ENCODE measurements at regions of chr5 and their contacts with region 1.

Region 1: DNA sequence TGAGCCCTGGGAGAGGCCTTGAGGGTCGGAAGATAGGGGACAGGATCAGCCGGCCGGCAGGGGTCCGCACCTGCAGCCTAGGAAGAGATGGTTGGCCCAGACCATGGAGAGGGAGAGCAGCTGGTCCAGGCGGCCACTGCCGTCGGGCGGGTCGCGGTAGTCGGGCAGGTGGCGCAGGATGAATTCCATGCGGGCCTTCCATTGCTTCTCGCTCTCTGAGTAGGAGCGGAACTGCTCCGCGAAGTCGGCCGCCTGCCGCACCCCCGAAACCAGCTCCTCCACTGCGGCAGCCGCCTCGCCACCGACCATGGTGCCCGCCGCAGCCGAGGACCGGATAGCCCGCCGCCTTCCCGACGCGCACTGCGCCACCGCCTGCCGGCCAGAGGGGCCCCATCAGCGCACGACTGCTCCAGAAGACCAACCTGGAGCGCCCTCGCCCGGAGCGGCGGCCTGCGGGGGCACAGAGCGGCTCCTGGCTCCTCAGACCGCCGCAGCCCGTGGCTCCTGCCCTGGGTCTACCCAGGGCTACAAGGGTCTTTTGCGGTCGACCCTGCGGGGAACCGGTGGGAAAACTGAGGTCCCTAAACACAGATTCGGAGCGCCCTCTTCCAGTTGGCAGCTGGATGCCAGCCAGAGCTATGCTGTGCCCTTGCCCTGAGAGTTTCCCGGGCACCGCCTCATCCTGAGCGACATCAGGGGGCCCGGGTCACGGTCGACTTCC is at the start of gene CDKN2AIPNL:
- DNase-seq: peak; percentile 83 to 93 (median 89)
- ATAC-seq: peak; percentile 100
- H3K4me3 ChIP-seq: peak within 1 kb of the TSS; percentile 82
- H3K4me3 Mint-ChIP-seq: peak within 1 kb of the TSS; percentile 86 to 96 (median 92)
- H3K27ac ChIP-seq: peak within 1 kb of the TSS; percentile 82
- H3K27ac Mint-ChIP-seq: peak within 1 kb of the TSS; percentile 63 to 93 (median 90)
- H3K4me1 ChIP-seq: peaks cover 16 to 23% of the 10 kb centered on the region in 2 donors
- H3K4me1 Mint-ChIP-seq: peaks cover 20 to 54% (median 38%) of the 10 kb centered on the region in 7 donors
- H3K27me3 ChIP-seq: no peaks in the 10 kb centered on the region
- H3K27me3 Mint-ChIP-seq: no peaks in the 10 kb centered on the region
- total RNA-seq, gene CDKN2AIPNL: 11.5 to 20.8 (median 16.8) TPM

Region 2: DNA sequence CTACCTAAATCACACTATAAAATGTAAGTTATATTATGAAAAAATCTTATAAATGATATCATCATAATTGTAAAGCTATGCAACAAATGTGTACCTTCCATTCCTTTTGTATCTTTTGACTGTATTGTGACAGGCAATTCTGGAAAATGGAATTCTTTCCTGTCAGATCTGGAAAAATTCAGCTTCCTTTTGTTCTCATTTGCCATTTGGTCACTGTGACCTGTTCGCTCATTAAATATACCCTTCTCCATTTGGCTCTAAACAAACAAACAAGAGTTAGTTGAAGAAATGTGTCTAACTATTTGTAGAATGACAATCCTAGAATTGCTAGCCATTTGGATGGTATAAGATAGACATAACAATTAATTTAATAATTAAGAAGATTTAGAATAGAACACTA is 107.4 kb before region 1 on chr5:
- CTCF ChIA-PET with region 1: interaction called, 6 read pairs
- POLR2A ChIA-PET with region 1: interaction called, 5 read pairs
- intact Hi-C with region 1: loop called in 1 of 2 experiments (anchors 1 kb)
- DNase-seq: no peak
- ATAC-seq: no peak
- H3K4me3 ChIP-seq: no peak overlapping the region
- H3K4me3 Mint-ChIP-seq: no peak overlapping the region
- H3K27ac ChIP-seq: no peak overlapping the region
- H3K27ac Mint-ChIP-seq: no peak overlapping the region
- H3K4me1 ChIP-seq: no peaks in the 10 kb centered on the region
- H3K4me1 Mint-ChIP-seq: peaks cover 0 to 5% (median 0%) of the 10 kb centered on the region in 7 donors
- H3K27me3 ChIP-seq: no peaks in the 10 kb centered on the region
- H3K27me3 Mint-ChIP-seq: peaks cover 0 to 8% (median 0%) of the 10 kb centered on the region in 5 donors

Region 3: GRCh38 chr5:134394932-134395331 is 16.8 kb before region 1 on chr5:
- CTCF ChIA-PET with region 1: no interaction called
- POLR2A ChIA-PET with region 1: interaction called, 4 read pairs
- intact Hi-C with region 1: loop called in 1 of 2 experiments (anchors 2 kb)
- DNase-seq: no peak
- ATAC-seq: no peak
- H3K4me3 ChIP-seq: no peak overlapping the region
- H3K4me3 Mint-ChIP-seq: no peak overlapping the region
- H3K27ac ChIP-seq: no peak overlapping the region
- H3K27ac Mint-ChIP-seq: no peak overlapping the region
- H3K4me1 ChIP-seq: no peaks in the 10 kb centered on the region
- H3K4me1 Mint-ChIP-seq: peaks cover 0 to 9% (median 0%) of the 10 kb centered on the region in 7 donors
- H3K27me3 ChIP-seq: no peaks in the 10 kb centered on the region
- H3K27me3 Mint-ChIP-seq: no peaks in the 10 kb centered on the region

Region 4: GRCh38 chr5:134465816-134466240 is 54.1 kb after region 1 on chr5:
- CTCF ChIA-PET with region 1: interaction called, 4 read pairs
- POLR2A ChIA-PET with region 1: interaction called, 10 read pairs
- intact Hi-C with region 1: loop called (anchors 1 to 5 kb)
- DNase-seq: peak in 6 of 9 donors; percentile 16 to 73 (median 20)
- ATAC-seq: peak; percentile 71
- H3K4me3 ChIP-seq: peak overlapping the region; percentile 71
- H3K4me3 Mint-ChIP-seq: peak overlapping the region; percentile 75 to 93 (median 86)
- H3K27ac ChIP-seq: peak overlapping the region; percentile 66
- H3K27ac Mint-ChIP-seq: peak overlapping the region in 8 of 9 donors; percentile 66 to 93 (median 86)
- H3K4me1 ChIP-seq: peaks cover 8 to 16% of the 10 kb centered on the region in 2 donors
- H3K4me1 Mint-ChIP-seq: peaks cover 7 to 25% (median 18%) of the 10 kb centered on the region in 7 donors
- H3K27me3 ChIP-seq: no peaks in the 10 kb centered on the region
- H3K27me3 Mint-ChIP-seq: no peaks in the 10 kb centered on the region

Region 5: GRCh38 chr5:134543820-134544614 is 132.3 kb after region 1 on chr5:
- CTCF ChIA-PET with region 1: interaction called, 3 read pairs
- POLR2A ChIA-PET with region 1: interaction called, 13 read pairs
- intact Hi-C with region 1: no loop called
- DNase-seq: peak in 2 of 9 donors; percentile 12 to 61
- ATAC-seq: peak; percentile 80
- H3K4me3 ChIP-seq: no peak overlapping the region
- H3K4me3 Mint-ChIP-seq: peak overlapping the region; percentile 19 to 80 (median 70)
- H3K27ac ChIP-seq: peak overlapping the region; percentile 62
- H3K27ac Mint-ChIP-seq: peak overlapping the region; percentile 73 to 93 (median 86)
- H3K4me1 ChIP-seq: peaks cover 30 to 38% of the 10 kb centered on the region in 2 donors
- H3K4me1 Mint-ChIP-seq: peaks cover 26 to 68% (median 53%) of the 10 kb centered on the region in 7 donors
- H3K27me3 ChIP-seq: no peaks in the 10 kb centered on the region
- H3K27me3 Mint-ChIP-seq: no peaks in the 10 kb centered on the region

Region 6: GRCh38 chr5:134637161-134637582 is 225.5 kb after region 1 on chr5:
- CTCF ChIA-PET with region 1: interaction called, 4 read pairs
- POLR2A ChIA-PET with region 1: interaction called, 4 read pairs
- intact Hi-C with region 1: loop called in 1 of 2 experiments (anchors 1 kb)
- DNase-seq: no peak
- ATAC-seq: no peak
- H3K4me3 ChIP-seq: no peak overlapping the region
- H3K4me3 Mint-ChIP-seq: no peak overlapping the region
- H3K27ac ChIP-seq: no peak overlapping the region
- H3K27ac Mint-ChIP-seq: no peak overlapping the region
- H3K4me1 ChIP-seq: no peaks in the 10 kb centered on the region
- H3K4me1 Mint-ChIP-seq: peaks cover 0 to 10% (median 4%) of the 10 kb centered on the region in 7 donors
- H3K27me3 ChIP-seq: no peaks in the 10 kb centered on the region
- H3K27me3 Mint-ChIP-seq: no peaks in the 10 kb centered on the region

Region 7: DNA sequence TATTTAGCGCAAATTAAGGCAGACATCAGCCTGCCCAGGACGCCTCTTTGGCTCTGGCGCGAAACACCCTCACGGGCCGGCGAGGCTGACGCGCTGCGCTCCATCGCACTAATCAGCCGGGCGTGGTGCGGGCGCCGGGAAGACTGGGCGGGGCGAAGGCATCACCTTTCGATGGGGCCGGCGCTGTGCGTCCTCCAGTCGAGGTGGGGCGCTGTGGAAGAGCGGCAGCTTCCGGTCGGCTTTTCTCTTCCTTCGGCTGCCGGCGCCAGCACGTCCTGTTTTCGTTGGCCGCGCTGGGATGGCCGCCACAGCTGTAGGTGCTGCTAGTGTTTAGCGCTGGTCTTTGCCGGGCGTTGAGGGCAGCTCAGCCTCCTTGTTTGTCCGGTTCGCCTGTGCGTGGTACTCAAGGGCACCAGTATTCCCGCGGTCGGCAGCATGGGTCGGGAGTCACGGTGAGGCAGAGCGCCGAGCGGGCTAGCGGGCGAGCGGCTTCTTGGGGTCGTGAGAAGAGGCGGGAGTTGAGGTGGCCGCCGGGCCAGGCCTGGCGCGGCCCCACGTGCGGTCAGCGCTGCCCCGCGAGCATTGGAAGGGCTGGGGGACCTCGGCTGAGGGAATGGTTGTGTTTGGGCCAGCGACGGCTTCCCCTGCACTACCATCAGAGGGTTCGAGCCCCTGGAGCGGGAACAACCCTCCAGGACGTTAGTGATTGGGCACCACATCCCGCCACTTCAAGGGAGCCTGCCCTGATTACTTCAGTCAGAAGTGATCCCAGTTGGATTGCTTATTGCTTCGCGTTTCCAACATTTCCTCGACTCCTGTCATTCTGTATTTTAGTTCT is 347.0 kb after region 1 on chr5 and contains the start of gene DDX46:
- CTCF ChIA-PET with region 1: no interaction called
- POLR2A ChIA-PET with region 1: no interaction called
- intact Hi-C with region 1: loop called (anchors 1 to 2 kb)
- DNase-seq: peak; percentile 85 to 95 (median 91)
- ATAC-seq: peak; percentile 99
- H3K4me3 ChIP-seq: peak within 1 kb of the TSS; percentile 75
- H3K4me3 Mint-ChIP-seq: peak within 1 kb of the TSS; percentile 92 to 100 (median 99)
- H3K27ac ChIP-seq: peak within 1 kb of the TSS; percentile 87
- H3K27ac Mint-ChIP-seq: peak within 1 kb of the TSS; percentile 93 to 99 (median 97)
- H3K4me1 ChIP-seq: peaks cover 12 to 13% of the 10 kb centered on the region in 2 donors
- H3K4me1 Mint-ChIP-seq: peaks cover 20 to 47% (median 38%) of the 10 kb centered on the region in 7 donors
- H3K27me3 ChIP-seq: no peaks in the 10 kb centered on the region
- H3K27me3 Mint-ChIP-seq: no peaks in the 10 kb centered on the region
- total RNA-seq, gene DDX46: 51.2 to 72.5 (median 64.2) TPM

Region 8: DNA sequence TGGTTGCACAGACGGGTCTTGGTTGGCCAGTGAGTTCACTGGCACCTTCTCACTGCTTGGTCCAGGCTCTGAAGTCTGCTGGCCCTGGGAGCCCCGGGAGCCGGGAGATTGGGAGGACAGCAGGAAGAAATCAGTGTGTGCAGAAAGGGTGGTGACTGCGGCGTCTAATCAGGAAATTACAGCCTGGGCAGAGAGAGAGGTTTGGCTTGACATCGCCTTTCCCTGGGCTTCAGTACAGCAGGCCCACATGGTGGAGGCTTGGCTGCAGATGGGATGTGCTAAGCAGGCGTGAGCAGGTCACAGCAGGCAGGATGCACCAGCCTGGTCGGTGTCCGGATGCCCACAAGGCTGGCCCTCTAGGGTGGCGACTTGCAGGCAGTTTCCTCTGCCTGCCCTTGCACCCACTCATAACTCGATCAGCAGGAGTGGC is 605.2 kb after region 1 on chr5:
- CTCF ChIA-PET with region 1: no interaction called
- POLR2A ChIA-PET with region 1: no interaction called
- intact Hi-C with region 1: no loop called
- DNase-seq: peak in 1 of 9 donors; percentile 12
- ATAC-seq: no peak
- H3K4me3 ChIP-seq: no peak overlapping the region
- H3K4me3 Mint-ChIP-seq: no peak overlapping the region
- H3K27ac ChIP-seq: no peak overlapping the region
- H3K27ac Mint-ChIP-seq: no peak overlapping the region
- H3K4me1 ChIP-seq: no peaks in the 10 kb centered on the region
- H3K4me1 Mint-ChIP-seq: no peaks in the 10 kb centered on the region
- H3K27me3 ChIP-seq: no peaks in the 10 kb centered on the region
- H3K27me3 Mint-ChIP-seq: peaks cover 0 to 12% (median 0%) of the 10 kb centered on the region in 5 donors